A673 (cell line): ENCODE measurements at regions of chr11 and their contacts with region 1.

Region 1: DNA sequence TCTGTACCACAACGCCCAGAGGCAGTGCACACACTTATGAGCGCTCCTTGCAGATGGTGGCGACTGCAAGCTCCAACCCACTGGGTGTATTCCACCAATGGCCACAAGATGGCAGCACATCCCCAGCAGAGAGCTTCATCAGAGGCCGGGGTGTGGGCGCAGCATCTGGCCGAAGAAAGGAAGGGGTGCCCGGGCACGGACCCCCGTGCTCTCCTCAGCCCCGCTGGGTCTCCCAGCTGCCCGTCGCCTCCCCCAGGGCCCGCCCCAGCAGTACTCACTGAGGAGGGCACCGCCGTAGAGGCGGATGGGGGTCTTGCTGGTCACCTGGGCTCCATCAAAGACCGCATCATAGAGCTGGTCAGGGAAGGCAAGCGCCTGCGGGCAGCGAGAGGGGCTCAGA is 14.2 kb downstream of the TP53I11 start:
- DNase-seq: peak; percentile 93
- H3K4me3 ChIP-seq: no peak overlapping the region
- H3K27ac ChIP-seq: no peak overlapping the region
- H3K4me1 ChIP-seq: peaks cover 5% of the 10 kb centered on the region
- H3K27me3 ChIP-seq: no peaks in the 10 kb centered on the region
- CTCF ChIP-seq: peak; percentile 100

Region 2: GRCh38 chr11:44793350-44794090 is 143.0 kb before region 1 on chr11:
- CTCF ChIA-PET with region 1: no interaction called
- POLR2A ChIA-PET with region 1: no interaction called
- intact Hi-C with region 1: no loop called
- DNase-seq: peak; percentile 54
- H3K4me3 ChIP-seq: no peak overlapping the region
- H3K27ac ChIP-seq: no peak overlapping the region
- H3K4me1 ChIP-seq: peaks cover 23% of the 10 kb centered on the region
- H3K27me3 ChIP-seq: no peaks in the 10 kb centered on the region
- CTCF ChIP-seq: no peak

Region 3: DNA sequence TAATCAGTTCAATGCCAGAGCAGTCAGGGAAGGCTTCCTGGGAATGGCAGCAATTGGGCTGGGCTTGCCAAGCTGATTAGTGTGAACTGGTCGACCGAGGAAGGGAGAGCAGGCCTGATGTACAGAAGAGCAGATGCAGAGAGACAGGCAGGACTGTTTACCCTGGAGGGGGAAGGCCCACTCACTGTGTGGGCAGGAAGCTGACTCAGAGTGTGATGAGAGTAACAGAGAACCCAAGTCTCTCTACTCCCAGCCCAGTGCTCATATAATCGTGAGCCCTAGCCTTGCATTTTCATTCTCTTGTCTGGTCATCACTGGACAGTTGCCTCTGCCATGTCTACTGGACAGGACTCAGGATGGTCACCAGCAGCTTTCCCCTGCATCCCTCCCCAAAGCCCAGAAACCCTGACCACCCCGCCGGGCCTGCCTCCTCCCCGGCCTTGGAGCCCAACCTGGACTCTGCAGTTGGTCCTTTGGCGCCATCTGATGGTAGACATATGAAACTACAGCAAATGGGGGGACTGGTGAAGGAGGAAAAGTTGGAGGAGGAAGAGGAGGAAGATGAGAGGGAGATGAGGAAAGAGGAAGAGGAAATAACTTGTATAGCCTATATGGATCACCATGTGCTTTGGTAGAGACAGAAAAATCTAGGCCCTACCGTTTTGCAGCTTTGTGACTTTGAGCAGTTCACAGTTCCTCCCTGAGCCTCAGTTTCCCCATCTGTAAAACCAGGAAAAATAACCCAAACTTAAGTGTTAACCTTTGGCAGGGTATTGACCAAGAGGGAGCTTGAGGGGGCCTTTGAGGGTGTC is 166.5 kb after region 1 on chr11:
- CTCF ChIA-PET with region 1: interaction called, 299 read pairs
- POLR2A ChIA-PET with region 1: no interaction called
- intact Hi-C with region 1: loop called (anchors 1 kb)
- DNase-seq: peak; percentile 85
- H3K4me3 ChIP-seq: no peak overlapping the region
- H3K27ac ChIP-seq: no peak overlapping the region
- H3K4me1 ChIP-seq: no peaks in the 10 kb centered on the region
- H3K27me3 ChIP-seq: peaks cover 26% of the 10 kb centered on the region
- CTCF ChIP-seq: peak; percentile 100

Region 4: DNA sequence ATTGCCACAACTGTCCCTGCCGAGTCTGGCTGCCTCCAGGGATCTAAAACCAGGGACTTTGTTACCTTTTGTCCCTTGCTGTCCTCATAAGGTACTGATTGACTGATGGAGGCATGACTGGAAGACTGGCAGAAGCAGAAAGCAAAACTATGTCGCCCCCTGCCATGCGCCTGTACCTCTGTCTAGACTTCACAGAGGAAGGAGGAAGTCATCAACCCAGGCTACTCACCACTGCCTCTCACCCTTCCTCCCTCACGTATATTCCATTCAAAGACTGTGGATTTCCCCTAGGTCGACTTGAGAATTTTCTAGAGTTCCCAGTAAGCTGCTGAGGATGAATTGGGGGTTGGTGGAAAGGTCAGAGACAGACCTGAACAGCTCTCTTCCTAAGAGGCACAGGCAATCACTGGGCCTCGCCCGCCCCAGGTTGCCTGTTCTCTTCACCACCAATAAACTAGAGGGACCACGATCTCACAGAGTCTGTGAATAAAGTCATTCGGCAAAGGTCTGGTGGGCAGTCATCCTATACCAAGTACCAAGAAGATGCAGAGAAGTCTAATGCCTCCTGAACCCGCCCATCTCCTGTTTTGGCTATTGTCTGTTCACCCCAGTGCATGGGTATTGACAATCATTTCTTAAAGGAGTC is 756.4 kb after region 1 on chr11:
- CTCF ChIA-PET with region 1: no interaction called
- POLR2A ChIA-PET with region 1: no interaction called
- intact Hi-C with region 1: no loop called
- DNase-seq: no peak
- H3K4me3 ChIP-seq: no peak overlapping the region
- H3K27ac ChIP-seq: no peak overlapping the region
- H3K4me1 ChIP-seq: no peaks in the 10 kb centered on the region
- H3K27me3 ChIP-seq: no peaks in the 10 kb centered on the region
- CTCF ChIP-seq: no peak; the same call in 1 of the 2 replicates

Region 5: GRCh38 chr11:46574656-46575055 is 1638.1 kb after region 1 on chr11:
- CTCF ChIA-PET with region 1: interaction called, 11 read pairs
- POLR2A ChIA-PET with region 1: no interaction called
- intact Hi-C with region 1: no loop called
- DNase-seq: no peak
- H3K4me3 ChIP-seq: no peak overlapping the region
- H3K27ac ChIP-seq: no peak overlapping the region
- H3K4me1 ChIP-seq: no peaks in the 10 kb centered on the region
- H3K27me3 ChIP-seq: no peaks in the 10 kb centered on the region
- CTCF ChIP-seq: no peak